ENCODE measurements at regions of chr17 and their contacts with region 1.

Region 1: DNA sequence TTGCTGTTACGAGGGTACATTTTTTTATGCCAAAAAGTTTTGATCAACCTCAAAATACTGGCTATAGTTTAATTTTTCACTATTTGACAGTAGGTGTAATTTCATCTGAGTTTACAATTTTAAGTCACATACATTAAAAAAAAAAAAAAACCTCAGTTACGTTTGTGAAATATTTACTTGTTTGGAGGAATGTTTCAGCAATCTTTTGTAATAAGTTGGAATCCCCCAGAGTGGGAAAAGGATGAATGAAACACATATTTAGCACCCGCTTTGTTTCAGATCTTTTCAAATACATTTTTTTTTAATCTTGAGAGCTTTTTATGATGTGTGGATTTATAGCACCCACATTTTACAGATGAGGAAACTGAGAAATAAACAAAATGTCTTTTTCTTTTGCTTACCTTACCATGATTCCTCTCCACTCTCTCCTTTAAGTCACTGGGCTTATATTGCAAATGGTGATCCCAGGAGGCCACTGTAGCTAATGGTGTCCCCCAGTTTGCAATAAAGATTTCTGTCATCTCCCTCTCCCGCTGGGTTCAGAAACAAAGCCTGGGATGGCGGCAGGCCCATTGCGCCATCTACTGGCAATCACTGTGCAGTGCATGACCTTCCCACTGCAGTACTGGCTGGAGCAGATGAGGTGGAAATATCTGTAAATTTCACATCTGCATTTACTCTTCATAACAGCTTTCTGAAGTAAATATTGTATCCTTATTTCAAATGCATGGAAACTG is 27.7 kb downstream of the TBC1D3B start:
- DNase-seq: peak in 1 of 2 donors; percentile 34
- ATAC-seq: peak; percentile 50 to 64
- H3K4me3 ChIP-seq: no peak overlapping the region
- H3K27ac ChIP-seq: no peak overlapping the region
- H3K4me1 ChIP-seq: no peaks in the 10 kb centered on the region
- H3K27me3 ChIP-seq: peaks cover 0 to 18% (median 0%) of the 10 kb centered on the region in 3 donors
- CTCF ChIP-seq: peak; percentile 55 to 95 (median 69)
- POLR2A ChIP-seq: no peak

Region 2: DNA sequence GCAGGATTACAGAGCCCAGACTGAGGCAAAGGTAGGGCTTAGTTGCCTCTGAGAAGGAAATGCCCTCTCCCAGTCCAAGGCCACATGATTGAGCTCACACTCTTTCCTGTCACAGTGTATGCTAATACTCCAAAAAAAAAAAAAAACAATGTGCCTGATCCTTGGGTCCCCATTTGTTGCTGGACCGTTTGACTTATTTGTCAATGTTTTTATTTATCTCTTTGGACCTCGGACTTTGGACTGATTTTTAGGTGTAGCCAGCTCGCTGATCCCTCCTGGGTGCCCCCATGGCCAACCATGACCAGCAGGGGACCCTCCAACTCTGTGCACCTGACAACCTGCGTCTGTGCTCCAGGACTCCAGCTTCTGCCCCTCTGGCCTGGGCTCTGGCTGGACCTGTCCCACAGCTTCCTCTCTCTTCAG is 166.8 kb before region 1 on chr17:
- in situ Hi-C with region 1: loop called in 2 of 4 experiments (anchors 10 to 25 kb)
- intact Hi-C with region 1: loop called (anchors 10 kb)
- DNase-seq: no peak
- ATAC-seq: no peak
- H3K4me3 ChIP-seq: no peak overlapping the region
- H3K27ac ChIP-seq: no peak overlapping the region
- H3K4me1 ChIP-seq: peaks cover 0 to under 1% of the 10 kb centered on the region in 2 donors
- H3K27me3 ChIP-seq: no peaks in the 10 kb centered on the region
- CTCF ChIP-seq: no peak
- POLR2A ChIP-seq: no peak

Measured in gastrocnemius medialis (tissue), 4 donors.